A673 (cell line): ENCODE measurements at regions of chr5 and their contacts with region 1.

Region 1: DNA sequence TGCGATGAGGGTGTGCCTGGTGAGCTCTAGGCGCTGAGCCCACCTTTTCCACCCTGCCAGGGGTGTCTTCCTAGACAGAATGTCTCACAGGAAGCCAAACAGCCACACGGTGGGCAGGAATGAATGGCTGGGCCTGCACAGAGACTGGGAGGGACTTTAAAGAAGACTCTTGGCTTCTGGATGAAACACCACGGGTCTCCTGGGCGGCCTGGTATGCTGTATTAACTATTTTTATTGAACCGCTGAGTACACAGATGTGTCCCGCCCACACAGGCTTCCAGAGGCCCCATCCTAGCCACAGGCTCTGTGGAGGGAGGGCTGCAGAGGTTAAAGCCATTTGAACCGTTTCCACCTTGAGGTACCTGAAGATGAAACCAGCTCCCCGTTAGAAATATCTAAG is 115.2 kb upstream of the CXCL14 start:
- DNase-seq: no peak
- H3K4me3 ChIP-seq: no peak overlapping the region
- H3K27ac ChIP-seq: no peak overlapping the region
- H3K4me1 ChIP-seq: peaks cover 4% of the 10 kb centered on the region
- H3K27me3 ChIP-seq: no peaks in the 10 kb centered on the region
- CTCF ChIP-seq: no peak

Region 2: GRCh38 chr5:135857630-135858304 is 163.8 kb after region 1 on chr5:
- CTCF ChIA-PET with region 1: no interaction called
- POLR2A ChIA-PET with region 1: no interaction called
- intact Hi-C with region 1: no loop called
- DNase-seq: no peak
- H3K4me3 ChIP-seq: no peak overlapping the region
- H3K27ac ChIP-seq: no peak overlapping the region
- H3K4me1 ChIP-seq: no peaks in the 10 kb centered on the region
- H3K27me3 ChIP-seq: peaks cover 38% of the 10 kb centered on the region
- CTCF ChIP-seq: no peak

Region 3: GRCh38 chr5:136212252-136212721 is 518.3 kb after region 1 on chr5:
- CTCF ChIA-PET with region 1: no interaction called
- POLR2A ChIA-PET with region 1: no interaction called
- intact Hi-C with region 1: loop called (anchors 10 kb)
- DNase-seq: peak; percentile 50
- H3K4me3 ChIP-seq: no peak overlapping the region
- H3K27ac ChIP-seq: no peak overlapping the region
- H3K4me1 ChIP-seq: no peaks in the 10 kb centered on the region
- H3K27me3 ChIP-seq: peaks cover 12% of the 10 kb centered on the region
- CTCF ChIP-seq: peak; percentile 94

Region 4: GRCh38 chr5:136927571-136927970 is 1233.6 kb after region 1 on chr5:
- CTCF ChIA-PET with region 1: no interaction called
- POLR2A ChIA-PET with region 1: no interaction called
- intact Hi-C with region 1: no loop called
- DNase-seq: no peak
- H3K4me3 ChIP-seq: no peak overlapping the region
- H3K27ac ChIP-seq: no peak overlapping the region
- H3K4me1 ChIP-seq: no peaks in the 10 kb centered on the region
- H3K27me3 ChIP-seq: no peaks in the 10 kb centered on the region
- CTCF ChIP-seq: no peak